CD8-positive, alpha-beta T cell (primary cell): ENCODE measurements at regions of chr16 and their contacts with region 1.

Region 1: GRCh38 chr16:14070877-14071575 is at the start of gene MRTFB:
- DNase-seq: peak; percentile 67 to 90 (median 78)
- ATAC-seq: peak; percentile 88
- H3K4me3 ChIP-seq: peak within 1 kb of the TSS; percentile 60 to 83
- H3K4me3 Mint-ChIP-seq: peak within 1 kb of the TSS; percentile 89
- H3K27ac ChIP-seq: peak within 1 kb of the TSS; percentile 5 to 41
- H3K27ac Mint-ChIP-seq: peak within 1 kb of the TSS; percentile 81
- H3K4me1 ChIP-seq: peaks cover 11% of the 10 kb centered on the region
- H3K4me1 Mint-ChIP-seq: peaks cover 15% of the 10 kb centered on the region
- H3K27me3 ChIP-seq: no peaks in the 10 kb centered on the region
- H3K27me3 Mint-ChIP-seq: peaks cover 7% of the 10 kb centered on the region
- CTCF ChIP-seq: no peak
- total RNA-seq, gene MRTFB: 13.4 to 14.5 TPM

Region 2: GRCh38 chr16:13463619-13464018 is 607.4 kb before region 1 on chr16:
- CTCF ChIA-PET with region 1: no interaction called
- POLR2A ChIA-PET with region 1: no interaction called
- intact Hi-C with region 1: no loop called
- DNase-seq: no peak
- ATAC-seq: no peak
- H3K4me3 ChIP-seq: no peak overlapping the region
- H3K4me3 Mint-ChIP-seq: no peak overlapping the region
- H3K27ac ChIP-seq: no peak overlapping the region
- H3K27ac Mint-ChIP-seq: no peak overlapping the region
- H3K4me1 ChIP-seq: no peaks in the 10 kb centered on the region
- H3K4me1 Mint-ChIP-seq: no peaks in the 10 kb centered on the region
- H3K27me3 ChIP-seq: no peaks in the 10 kb centered on the region
- H3K27me3 Mint-ChIP-seq: no peaks in the 10 kb centered on the region
- CTCF ChIP-seq: no peak

Region 3: GRCh38 chr16:14193316-14193871 is 122.4 kb after region 1 on chr16:
- CTCF ChIA-PET with region 1: no interaction called
- POLR2A ChIA-PET with region 1: no interaction called
- intact Hi-C with region 1: loop called in 1 of 2 experiments (anchors 5 kb)
- DNase-seq: peak in 3 of 9 experiments; percentile 11 to 58 (median 18)
- ATAC-seq: peak; percentile 64
- H3K4me3 ChIP-seq: peak overlapping the region in 1 of 2 experiments; percentile 31
- H3K4me3 Mint-ChIP-seq: peak overlapping the region; percentile 71
- H3K27ac ChIP-seq: peak overlapping the region; percentile 2
- H3K27ac Mint-ChIP-seq: peak overlapping the region; percentile 92
- H3K4me1 ChIP-seq: peaks cover 23% of the 10 kb centered on the region
- H3K4me1 Mint-ChIP-seq: peaks cover 46% of the 10 kb centered on the region
- H3K27me3 ChIP-seq: no peaks in the 10 kb centered on the region
- H3K27me3 Mint-ChIP-seq: no peaks in the 10 kb centered on the region
- CTCF ChIP-seq: no peak

Region 4: GRCh38 chr16:14632692-14633569 is 561.9 kb after region 1 on chr16 and contains the start of gene BFAR:
- CTCF ChIA-PET with region 1: no interaction called
- POLR2A ChIA-PET with region 1: no interaction called
- intact Hi-C with region 1: loop called in 1 of 2 experiments (anchors 2 kb)
- DNase-seq: peak; percentile 98 to 100 (median 99)
- ATAC-seq: peak; percentile 68
- H3K4me3 ChIP-seq: peak within 1 kb of the TSS; percentile 95 to 100
- H3K4me3 Mint-ChIP-seq: peak within 1 kb of the TSS; percentile 100
- H3K27ac ChIP-seq: peak within 1 kb of the TSS; percentile 82 to 94
- H3K27ac Mint-ChIP-seq: peak within 1 kb of the TSS; percentile 99
- H3K4me1 ChIP-seq: peaks cover 60% of the 10 kb centered on the region
- H3K4me1 Mint-ChIP-seq: peaks cover 73% of the 10 kb centered on the region
- H3K27me3 ChIP-seq: no peaks in the 10 kb centered on the region
- H3K27me3 Mint-ChIP-seq: no peaks in the 10 kb centered on the region
- CTCF ChIP-seq: no peak
- total RNA-seq, gene BFAR: 34.0 to 41.7 TPM